ENCODE measurements at regions of chr10 and their contacts with region 1.

Region 1: DNA sequence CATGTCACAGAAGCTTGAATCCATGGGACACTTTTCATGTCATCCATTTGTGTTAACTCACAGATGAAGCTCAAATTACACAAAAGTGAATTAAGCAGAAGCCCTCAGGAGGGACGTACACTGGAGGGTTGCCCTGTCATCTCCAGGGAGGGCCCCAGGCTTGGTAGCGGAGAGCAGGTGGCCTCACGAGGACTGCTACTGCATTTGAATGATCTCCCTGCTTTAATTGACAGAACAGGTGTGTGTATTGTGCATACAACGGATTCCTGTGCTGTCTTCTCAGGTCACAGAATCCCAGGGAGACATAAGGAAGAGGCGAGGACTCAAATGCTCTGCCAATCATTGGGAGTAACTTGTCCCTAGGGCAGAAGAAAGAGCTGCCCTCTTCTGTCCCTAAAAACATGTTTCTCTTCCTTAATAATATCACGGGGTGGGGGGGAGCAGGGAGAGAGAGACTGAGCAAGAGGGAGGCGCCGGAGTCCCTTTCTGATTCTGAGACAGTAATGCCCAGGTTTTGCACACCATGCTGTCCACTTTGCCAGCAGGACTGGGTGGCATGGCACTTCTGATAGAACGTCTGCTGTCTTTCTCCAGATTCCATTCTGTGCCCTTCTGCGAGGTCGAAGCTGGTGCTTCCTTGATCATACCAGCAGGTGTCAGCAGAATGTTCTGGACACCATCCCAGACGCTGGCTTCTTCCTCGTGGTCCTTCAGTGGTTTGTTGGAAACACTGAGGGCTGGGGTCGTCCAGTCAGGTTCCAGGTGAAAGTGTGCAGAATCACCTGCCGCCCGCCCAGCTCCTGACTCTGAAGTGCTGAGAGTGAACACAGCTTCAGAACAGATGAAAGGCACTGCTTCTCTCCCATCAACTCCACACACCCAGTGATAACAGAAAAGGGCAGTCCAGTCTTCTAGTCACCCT is 26.2 kb upstream of the RASGEF1A start:
- DNase-seq: peak in 1 of 2 donors; percentile 60
- ATAC-seq: peak; percentile 78
- H3K4me3 ChIP-seq: no peak overlapping the region
- H3K27ac ChIP-seq: no peak overlapping the region
- H3K4me1 ChIP-seq: no peaks in the 10 kb centered on the region
- H3K27me3 ChIP-seq: no peaks in the 10 kb centered on the region

Region 2: DNA sequence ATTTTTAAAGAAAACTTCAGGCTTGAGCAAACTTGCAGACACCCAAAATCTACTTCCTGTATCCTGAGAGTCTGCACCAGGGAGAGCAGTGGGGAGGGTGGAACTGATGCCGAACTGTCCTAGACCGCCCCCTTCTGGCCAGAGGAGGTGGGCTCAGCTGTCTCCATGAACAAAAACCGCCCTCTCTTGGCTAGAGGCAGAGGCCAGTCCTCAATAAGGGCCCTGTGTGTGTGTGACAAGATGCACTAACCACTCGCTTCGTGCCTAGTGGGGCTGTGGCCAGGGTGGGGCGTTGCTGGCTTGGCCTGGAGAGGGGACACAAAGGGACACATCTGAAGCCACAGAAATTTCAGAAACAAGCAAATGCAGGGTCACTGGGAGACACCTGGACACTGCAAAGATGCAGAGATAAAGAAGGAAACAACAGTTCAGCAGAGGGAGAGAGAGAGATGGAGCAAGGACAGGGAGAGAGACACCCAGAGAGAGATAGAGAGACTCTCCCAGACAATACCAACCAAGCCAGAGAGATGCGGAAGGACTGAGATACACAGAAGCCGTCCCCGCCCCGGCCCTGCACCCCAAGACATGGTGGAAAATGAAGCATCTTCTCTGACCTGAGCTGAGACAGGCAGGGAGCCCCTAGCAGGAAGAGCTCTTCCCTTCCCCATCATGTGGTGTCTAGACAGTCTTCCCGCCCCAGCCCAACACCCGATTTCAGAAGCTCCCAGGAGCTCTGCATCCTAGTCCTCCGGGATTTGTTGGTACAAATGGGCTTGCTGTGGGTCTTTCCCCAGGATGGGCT is 55.7 kb after region 1 on chr10:
- intact Hi-C with region 1: loop called in 1 of 2 experiments (anchors 5 kb)
- DNase-seq: peak; percentile 90 to 91
- ATAC-seq: peak; percentile 94
- H3K4me3 ChIP-seq: no peak overlapping the region
- H3K27ac ChIP-seq: no peak overlapping the region
- H3K4me1 ChIP-seq: no peaks in the 10 kb centered on the region
- H3K27me3 ChIP-seq: no peaks in the 10 kb centered on the region

Region 3: GRCh38 chr10:43461950-43462349 is 168.9 kb after region 1 on chr10:
- intact Hi-C with region 1: loop called (anchors 2 kb)
- DNase-seq: no peak
- ATAC-seq: peak; percentile 64
- H3K4me3 ChIP-seq: no peak overlapping the region
- H3K27ac ChIP-seq: no peak overlapping the region
- H3K4me1 ChIP-seq: no peaks in the 10 kb centered on the region
- H3K27me3 ChIP-seq: no peaks in the 10 kb centered on the region